BJ (cell line): ENCODE measurements at regions of chr2 and their contacts with region 1.

Region 1: DNA sequence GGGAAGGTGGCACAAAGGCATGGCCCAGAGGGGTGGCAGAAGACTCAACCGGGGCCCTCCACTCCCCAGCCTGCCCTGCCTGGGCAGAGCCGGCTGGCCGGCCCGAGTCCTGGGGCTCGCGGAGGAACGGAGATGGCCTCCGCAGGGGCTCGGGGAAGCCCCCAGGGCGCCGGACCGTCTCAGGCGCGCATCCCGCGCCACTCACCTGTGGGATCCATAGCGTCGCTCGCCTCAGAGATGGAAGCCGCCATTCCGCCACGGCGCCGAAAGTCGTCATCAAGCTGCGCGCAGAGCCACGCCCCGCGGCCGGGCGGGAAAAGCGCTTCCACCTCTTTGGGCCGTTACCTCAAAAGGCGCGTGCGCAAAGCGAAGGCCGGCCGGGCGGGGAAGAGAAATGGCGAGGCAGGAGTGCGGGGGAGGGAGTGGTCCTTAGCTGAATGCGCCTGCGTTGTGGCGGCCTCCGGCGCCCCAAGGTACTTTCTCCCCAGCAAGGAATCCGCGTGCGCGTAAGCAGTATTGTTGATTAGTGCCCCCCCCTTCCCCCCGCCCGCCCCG is at the start of gene SMPD4:
- DNase-seq: peak; percentile 64
- H3K4me3 ChIP-seq: peak within 1 kb of the TSS; percentile 97
- H3K27me3 ChIP-seq: no peaks in the 10 kb centered on the region
- CTCF ChIP-seq: no peak
- polyA plus RNA-seq, gene SMPD4: 25.0 and 60.1 TPM in 2 replicates

Region 2: DNA sequence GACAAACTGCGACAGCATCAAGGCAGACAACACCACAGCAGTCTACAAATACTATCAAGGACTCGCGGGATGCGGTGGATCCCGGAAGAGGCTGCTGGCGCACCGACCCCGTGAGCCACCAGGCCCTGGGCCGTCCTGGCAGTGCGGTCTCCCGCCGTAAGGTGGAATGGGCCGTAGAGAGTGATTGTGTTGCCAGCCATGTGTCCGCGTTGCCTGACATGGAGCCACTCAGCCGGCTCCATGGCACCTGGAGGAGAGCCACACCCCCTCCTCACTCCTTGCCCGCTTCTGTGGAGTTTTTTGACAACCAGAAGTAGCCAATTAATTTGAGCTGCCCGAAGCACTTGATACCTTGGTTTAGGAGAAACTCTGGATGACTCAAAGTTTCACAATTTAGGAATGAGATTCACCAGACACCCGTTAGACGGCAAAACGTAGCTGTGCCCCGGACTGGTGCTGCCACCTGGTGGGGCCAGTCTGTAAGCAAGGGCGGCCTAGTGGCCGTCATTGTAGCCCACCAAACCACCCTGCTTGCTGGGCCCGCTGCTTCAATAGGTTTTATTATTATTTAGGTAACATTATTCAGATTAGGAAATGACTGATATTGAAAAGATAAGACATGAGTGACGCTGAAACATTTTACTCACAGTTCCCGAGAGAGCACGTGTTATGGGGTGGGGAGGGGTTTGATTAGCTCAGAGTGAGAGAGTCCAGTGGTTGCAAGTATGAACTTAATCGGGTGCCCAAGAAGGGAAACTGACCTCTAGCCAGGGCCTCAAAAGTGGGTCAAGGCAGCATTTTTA is 151.1 kb after region 1 on chr2:
- CTCF ChIA-PET with region 1: interaction called, 16 read pairs
- POLR2A ChIA-PET with region 1: interaction called, 3 read pairs
- DNase-seq: no peak
- H3K4me3 ChIP-seq: no peak overlapping the region; the same call in 1 of the 2 replicates
- H3K27me3 ChIP-seq: peaks cover 2% of the 10 kb centered on the region
- CTCF ChIP-seq: peak; percentile 98

Region 3: GRCh38 chr2:131201098-131201497 is 1019.7 kb after region 1 on chr2:
- CTCF ChIA-PET with region 1: no interaction called
- POLR2A ChIA-PET with region 1: interaction called, 12 read pairs
- DNase-seq: no peak
- H3K4me3 ChIP-seq: no peak overlapping the region
- H3K27me3 ChIP-seq: no peaks in the 10 kb centered on the region
- CTCF ChIP-seq: no peak